Psoas muscle (tissue), 8 donors: ENCODE measurements at regions of chr1 and their contacts with region 1.

Region 1: GRCh38 chr1:231550448-231550781 is 21.9 kb downstream of the TSNAX start:
- DNase-seq: no peak
- ATAC-seq: peak; percentile 23 to 67 (median 56)
- H3K4me3 ChIP-seq: no peak overlapping the region
- H3K27ac ChIP-seq: no peak overlapping the region
- H3K4me1 ChIP-seq: peaks cover 7% of the 10 kb centered on the region
- H3K27me3 ChIP-seq: no peaks in the 10 kb centered on the region
- CTCF ChIP-seq: peak; percentile 35

Region 2: GRCh38 chr1:231584921-231585320 is 34.5 kb after region 1 on chr1:
- intact Hi-C with region 1: loop called in 1 of 2 experiments (anchors 5 kb)
- DNase-seq: no peak
- ATAC-seq: no peak
- H3K4me3 ChIP-seq: no peak overlapping the region
- H3K27ac ChIP-seq: no peak overlapping the region
- H3K4me1 ChIP-seq: peaks cover 7% of the 10 kb centered on the region
- H3K27me3 ChIP-seq: no peaks in the 10 kb centered on the region
- CTCF ChIP-seq: no peak